ENCODE measurements at regions of chr5 and their contacts with region 1.

Region 1: GRCh38 chr5:10424124-10424731 is 17.5 kb upstream of the ROPN1L start:
- DNase-seq: no peak
- H3K4me3 ChIP-seq: no peak overlapping the region
- H3K27ac ChIP-seq: no peak overlapping the region
- H3K4me1 ChIP-seq: peaks cover 2 to 39% (median 20%) of the 10 kb centered on the region in 6 donors
- H3K27me3 ChIP-seq: no peaks in the 10 kb centered on the region
- CTCF ChIP-seq: peak in 8 of 11 experiments; percentile 12 to 58 (median 52)
- POLR2A ChIP-seq: no peak

Region 2: GRCh38 chr5:10283927-10284635 is 140.1 kb before region 1 on chr5:
- intact Hi-C with region 1: loop called (anchors 10 kb)
- DNase-seq: peak; percentile 95
- H3K4me3 ChIP-seq: peak overlapping the region in 1 of 8 donors; percentile 13
- H3K27ac ChIP-seq: no peak overlapping the region
- H3K4me1 ChIP-seq: peaks cover 0 to 18% (median 10%) of the 10 kb centered on the region in 6 donors
- H3K27me3 ChIP-seq: no peaks in the 10 kb centered on the region
- CTCF ChIP-seq: peak; percentile 69 to 96 (median 88)
- POLR2A ChIP-seq: no peak

Region 3: DNA sequence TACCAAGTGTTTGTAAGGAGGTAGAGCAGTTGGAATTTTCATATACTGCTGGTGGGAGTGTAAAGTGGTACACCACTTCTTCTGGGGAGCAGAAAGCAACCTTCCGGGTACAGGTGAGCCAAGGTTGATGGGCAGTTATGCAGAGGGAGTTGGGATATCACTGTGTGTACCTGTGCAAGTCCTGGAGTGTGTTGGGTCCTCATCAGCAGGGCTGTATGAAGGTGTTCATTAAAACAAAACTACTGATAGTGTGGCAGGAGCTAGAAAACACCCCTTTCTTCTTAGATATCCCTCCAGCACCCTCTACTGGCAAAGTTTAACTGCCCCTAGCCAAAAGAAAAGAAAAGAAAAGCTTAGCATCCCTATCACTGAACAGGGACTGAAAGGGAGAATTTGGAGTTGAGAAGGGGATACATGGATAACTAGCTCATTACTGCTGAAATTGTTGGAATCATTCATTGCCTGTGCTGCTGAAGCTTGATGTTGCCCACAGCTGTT is 60.0 kb before region 1 on chr5:
- intact Hi-C with region 1: loop called (anchors 10 kb)
- DNase-seq: no peak
- H3K4me3 ChIP-seq: no peak overlapping the region
- H3K27ac ChIP-seq: no peak overlapping the region
- H3K4me1 ChIP-seq: peaks cover 38 to 100% (median 90%) of the 10 kb centered on the region in 6 donors
- H3K27me3 ChIP-seq: no peaks in the 10 kb centered on the region
- CTCF ChIP-seq: no peak
- POLR2A ChIP-seq: no peak

Region 4: GRCh38 chr5:10536931-10537579 is 112.8 kb after region 1 on chr5:
- intact Hi-C with region 1: no loop called
- DNase-seq: no peak
- H3K4me3 ChIP-seq: peak overlapping the region in 3 of 8 donors; percentile 0 to 47 (median 5)
- H3K27ac ChIP-seq: peak overlapping the region in 5 of 8 donors; percentile 28 to 54 (median 50)
- H3K4me1 ChIP-seq: peaks cover 9 to 55% (median 25%) of the 10 kb centered on the region in 6 donors
- H3K27me3 ChIP-seq: peaks cover 0 to 14% (median 0%) of the 10 kb centered on the region in 7 donors
- CTCF ChIP-seq: no peak
- POLR2A ChIP-seq: no peak

Measured in spleen (tissue), 13 donors.